T-cell (primary cell): ENCODE measurements at regions of chr14 and their contacts with region 1.

Region 1: DNA sequence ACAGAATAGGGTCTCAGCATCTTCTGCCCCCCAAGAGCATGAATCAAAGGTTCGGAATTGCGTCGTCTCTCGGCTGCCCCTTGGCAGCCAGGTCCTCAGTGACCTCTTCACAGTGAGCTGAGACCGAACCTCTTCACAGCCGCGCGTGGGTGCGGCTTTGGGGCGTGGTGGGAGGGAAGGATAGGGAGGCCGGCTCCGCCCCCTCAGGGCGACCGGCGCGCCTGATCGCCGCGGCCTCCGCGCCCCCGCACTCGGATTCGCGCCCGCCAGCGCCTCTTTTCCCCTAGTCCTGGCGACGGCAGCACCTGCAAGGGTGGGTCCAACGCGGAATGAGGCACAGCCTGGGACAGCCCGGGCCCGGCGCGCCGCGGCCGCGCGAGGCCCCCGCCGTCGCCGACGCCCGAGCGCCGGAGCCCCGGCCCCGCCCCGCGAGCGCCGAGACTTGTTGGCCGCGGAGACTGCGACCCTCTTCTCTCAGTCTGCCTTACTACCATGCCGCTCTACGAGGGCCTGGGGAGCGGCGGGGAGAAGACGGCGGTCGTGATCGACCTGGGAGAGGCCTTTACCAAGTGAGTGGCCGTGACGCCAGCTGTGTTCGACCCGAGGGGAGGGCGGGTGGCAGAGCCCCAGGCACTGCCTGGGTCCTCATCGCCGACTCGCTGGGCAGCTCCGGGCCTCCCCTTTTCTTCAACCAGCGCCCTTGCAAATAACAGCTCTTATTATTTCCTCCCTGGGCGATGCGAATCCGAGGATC is at the start of gene ACTR10:
- DNase-seq: peak; percentile 60 to 92 (median 77)
- ATAC-seq: peak; percentile 90 to 93 (median 91)
- H3K4me3 ChIP-seq: peak within 1 kb of the TSS; percentile 84 to 95
- H3K4me3 Mint-ChIP-seq: peak within 1 kb of the TSS; percentile 94 to 96 (median 96)
- H3K27ac ChIP-seq: peak within 1 kb of the TSS; percentile 82
- H3K27ac Mint-ChIP-seq: peak within 1 kb of the TSS; percentile 96
- H3K4me1 ChIP-seq: peaks cover 6 to 21% of the 10 kb centered on the region in 2 experiments
- H3K4me1 Mint-ChIP-seq: peaks cover 38 to 53% (median 43%) of the 10 kb centered on the region in 3 donors
- H3K27me3 ChIP-seq: no peaks in the 10 kb centered on the region
- H3K27me3 Mint-ChIP-seq: no peaks in the 10 kb centered on the region
- total RNA-seq, gene ACTR10: 36.7 to 49.7 (median 42.3) TPM

Region 2: DNA sequence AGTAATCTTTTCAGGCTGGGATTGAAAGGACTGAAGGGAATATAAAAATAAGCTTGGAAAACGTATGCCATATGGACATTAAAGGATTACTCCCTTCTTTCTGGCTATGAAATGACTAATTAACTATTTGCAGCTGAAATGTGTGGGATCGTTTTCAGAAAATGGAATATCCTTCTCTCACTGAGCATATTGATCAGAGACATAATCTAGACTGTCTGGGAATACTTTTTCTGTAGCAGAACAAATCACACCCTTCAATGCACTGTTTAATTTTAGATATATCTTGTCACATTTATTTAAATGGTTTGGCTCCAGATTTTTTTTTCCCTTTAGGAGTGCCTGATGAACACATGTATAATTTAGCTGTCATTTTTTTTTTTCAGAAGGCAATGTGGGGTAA is 10.7 kb before region 1 on chr14:
- CTCF ChIA-PET with region 1: no interaction called
- POLR2A ChIA-PET with region 1: no interaction called
- DNase-seq: no peak
- ATAC-seq: no peak
- H3K4me3 ChIP-seq: no peak overlapping the region
- H3K4me3 Mint-ChIP-seq: no peak overlapping the region
- H3K27ac ChIP-seq: no peak overlapping the region
- H3K27ac Mint-ChIP-seq: no peak overlapping the region
- H3K4me1 ChIP-seq: no peaks in the 10 kb centered on the region
- H3K4me1 Mint-ChIP-seq: no peaks in the 10 kb centered on the region
- H3K27me3 ChIP-seq: no peaks in the 10 kb centered on the region
- H3K27me3 Mint-ChIP-seq: peaks cover 14 to 18% of the 10 kb centered on the region in 2 donors

Region 3: DNA sequence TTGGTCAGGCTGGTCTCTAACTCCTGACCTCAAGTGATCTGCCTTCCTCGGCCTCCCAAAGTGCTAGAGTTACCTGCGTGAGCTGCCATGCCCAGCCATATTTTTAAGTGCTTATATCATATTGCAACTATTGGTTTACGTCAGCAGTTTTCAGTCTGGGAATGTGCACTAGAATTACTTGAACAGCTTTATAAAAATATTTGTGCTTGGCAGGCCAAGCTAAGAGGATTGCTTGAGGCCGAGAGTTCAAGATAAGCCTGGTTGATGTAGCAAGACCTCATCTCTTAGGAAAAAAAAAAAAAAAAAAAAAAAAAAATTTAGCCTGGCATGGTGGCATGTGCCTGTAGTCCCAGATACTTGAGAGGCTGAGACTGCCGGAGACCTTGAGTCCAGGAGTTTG is 244.7 kb after region 1 on chr14:
- CTCF ChIA-PET with region 1: interaction called in 1 of 2 experiments, 15 read pairs
- POLR2A ChIA-PET with region 1: no interaction called
- DNase-seq: no peak
- ATAC-seq: no peak
- H3K4me3 ChIP-seq: no peak overlapping the region
- H3K4me3 Mint-ChIP-seq: no peak overlapping the region
- H3K27ac ChIP-seq: no peak overlapping the region
- H3K27ac Mint-ChIP-seq: no peak overlapping the region
- H3K4me1 ChIP-seq: no peaks in the 10 kb centered on the region
- H3K4me1 Mint-ChIP-seq: no peaks in the 10 kb centered on the region
- H3K27me3 ChIP-seq: no peaks in the 10 kb centered on the region
- H3K27me3 Mint-ChIP-seq: no peaks in the 10 kb centered on the region